CD8-positive, alpha-beta memory T cell (primary cell): ENCODE measurements at regions of chr4 and their contacts with region 1.

Region 1: GRCh38 chr4:109998867-109999584 is 86.3 kb downstream of the EGF start:
- DNase-seq: peak in 2 of 5 donors; percentile 42 to 51
- H3K4me3 ChIP-seq: no peak overlapping the region
- H3K4me3 Mint-ChIP-seq: no peak overlapping the region
- H3K27ac ChIP-seq: no peak overlapping the region
- H3K27ac Mint-ChIP-seq: no peak overlapping the region
- H3K4me1 ChIP-seq: no peaks in the 10 kb centered on the region
- H3K4me1 Mint-ChIP-seq: peaks cover 0 to 10% (median 8%) of the 10 kb centered on the region in 3 donors
- H3K27me3 ChIP-seq: no peaks in the 10 kb centered on the region
- H3K27me3 Mint-ChIP-seq: peaks cover 0 to 15% of the 10 kb centered on the region in 2 donors

Region 2: GRCh38 chr4:109902559-109903251 is 96.3 kb before region 1 on chr4:
- CTCF ChIA-PET with region 1: no interaction called
- POLR2A ChIA-PET with region 1: no interaction called
- DNase-seq: no peak
- H3K4me3 ChIP-seq: no peak overlapping the region
- H3K4me3 Mint-ChIP-seq: no peak overlapping the region
- H3K27ac ChIP-seq: no peak overlapping the region
- H3K27ac Mint-ChIP-seq: no peak overlapping the region
- H3K4me1 ChIP-seq: no peaks in the 10 kb centered on the region
- H3K4me1 Mint-ChIP-seq: no peaks in the 10 kb centered on the region
- H3K27me3 ChIP-seq: no peaks in the 10 kb centered on the region
- H3K27me3 Mint-ChIP-seq: peaks cover 11 to 47% of the 10 kb centered on the region in 2 donors

Region 3: DNA sequence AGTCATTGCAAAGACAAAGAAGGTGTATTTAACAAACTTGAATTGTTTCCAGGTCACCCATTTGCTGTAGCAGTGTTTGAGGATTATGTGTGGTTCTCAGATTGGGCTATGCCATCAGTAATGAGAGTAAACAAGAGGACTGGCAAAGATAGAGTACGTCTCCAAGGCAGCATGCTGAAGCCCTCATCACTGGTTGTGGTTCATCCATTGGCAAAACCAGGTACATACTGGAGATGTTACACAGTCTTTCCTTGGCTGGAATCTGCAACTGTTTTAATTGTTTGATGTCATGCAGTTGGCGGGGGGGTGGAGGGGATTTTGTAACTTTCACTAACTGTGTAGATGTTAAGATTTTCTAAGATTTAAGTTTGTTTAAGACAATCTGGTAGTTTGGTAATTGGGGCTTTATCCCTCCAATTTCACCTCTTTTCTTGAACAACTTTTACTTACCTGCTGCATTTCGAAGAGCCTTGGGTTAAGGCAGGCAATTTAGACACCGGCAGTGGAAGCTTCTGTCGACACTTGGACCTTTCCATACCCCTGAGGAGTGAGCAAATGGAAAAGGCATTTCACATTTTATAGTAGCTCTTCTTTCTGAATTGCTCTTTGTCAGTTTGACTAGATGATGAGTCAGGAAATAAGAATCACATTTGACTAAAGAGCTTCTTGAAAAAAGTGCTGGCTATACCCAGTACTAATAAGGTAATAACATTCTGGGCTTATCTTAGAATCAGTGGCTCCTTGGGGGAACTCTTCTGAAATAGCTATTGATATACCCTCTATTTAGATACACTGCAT is 18.9 kb before region 1 on chr4:
- CTCF ChIA-PET with region 1: interaction called, 11 read pairs
- POLR2A ChIA-PET with region 1: no interaction called
- DNase-seq: no peak
- H3K4me3 ChIP-seq: no peak overlapping the region
- H3K4me3 Mint-ChIP-seq: no peak overlapping the region
- H3K27ac ChIP-seq: no peak overlapping the region
- H3K27ac Mint-ChIP-seq: peak overlapping the region in 1 of 8 donors; percentile 17
- H3K4me1 ChIP-seq: no peaks in the 10 kb centered on the region
- H3K4me1 Mint-ChIP-seq: no peaks in the 10 kb centered on the region
- H3K27me3 ChIP-seq: no peaks in the 10 kb centered on the region
- H3K27me3 Mint-ChIP-seq: peaks cover 10 to 16% of the 10 kb centered on the region in 2 donors

Region 4: GRCh38 chr4:110510955-110511544 is 512.0 kb after region 1 on chr4:
- CTCF ChIA-PET with region 1: interaction called, 106 read pairs
- POLR2A ChIA-PET with region 1: no interaction called
- DNase-seq: peak in 2 of 5 donors; percentile 43
- H3K4me3 ChIP-seq: no peak overlapping the region
- H3K4me3 Mint-ChIP-seq: no peak overlapping the region
- H3K27ac ChIP-seq: no peak overlapping the region
- H3K27ac Mint-ChIP-seq: no peak overlapping the region
- H3K4me1 ChIP-seq: peaks cover 10% of the 10 kb centered on the region
- H3K4me1 Mint-ChIP-seq: peaks cover 9 to 12% (median 11%) of the 10 kb centered on the region in 3 donors
- H3K27me3 ChIP-seq: no peaks in the 10 kb centered on the region
- H3K27me3 Mint-ChIP-seq: no peaks in the 10 kb centered on the region

Region 5: DNA sequence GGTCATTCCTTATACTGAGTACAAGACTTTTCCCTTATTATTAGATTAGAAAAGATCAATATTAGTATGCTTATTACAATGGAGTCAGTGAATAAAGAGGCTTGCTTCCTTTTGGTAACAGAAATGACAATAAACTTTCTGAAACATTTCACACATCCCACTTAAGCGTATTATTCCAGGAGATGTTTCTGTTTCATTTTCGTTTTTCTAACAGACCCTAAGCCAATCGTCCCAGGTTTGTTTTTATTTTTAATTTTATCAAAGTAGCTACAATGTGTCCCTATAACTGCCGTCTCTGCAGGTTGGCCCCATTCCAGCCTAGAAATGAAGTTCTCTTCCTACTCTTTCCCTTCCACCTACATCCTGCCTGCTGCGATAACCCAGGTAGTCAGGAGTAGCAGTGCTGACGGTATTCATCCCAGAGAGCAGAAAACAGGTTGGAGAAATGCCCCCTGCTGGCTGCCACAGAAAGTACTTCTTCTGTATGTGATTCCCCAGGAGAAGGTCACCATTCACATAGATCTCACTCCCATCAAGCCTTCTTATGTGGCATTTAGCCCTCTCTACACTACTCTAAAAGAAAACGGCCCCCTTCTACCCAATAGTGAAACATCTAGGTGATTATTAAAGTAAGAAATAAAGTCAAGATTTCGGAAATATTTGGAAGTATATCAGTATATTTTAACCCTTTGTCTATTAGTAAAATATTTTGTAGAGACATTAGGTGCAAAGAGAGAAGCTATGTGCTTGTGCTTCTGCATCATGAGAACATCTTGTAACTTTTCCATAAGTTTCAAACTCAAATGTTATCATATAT is 517.3 kb after region 1 on chr4:
- CTCF ChIA-PET with region 1: interaction called, 106 read pairs
- POLR2A ChIA-PET with region 1: no interaction called
- DNase-seq: peak; percentile 61 to 76 (median 65)
- H3K4me3 ChIP-seq: peak overlapping the region; percentile 92
- H3K4me3 Mint-ChIP-seq: peak overlapping the region; percentile 86 to 98 (median 97)
- H3K27ac ChIP-seq: no peak overlapping the region
- H3K27ac Mint-ChIP-seq: peak overlapping the region in 7 of 8 donors; percentile 78 to 94 (median 90)
- H3K4me1 ChIP-seq: peaks cover 10% of the 10 kb centered on the region
- H3K4me1 Mint-ChIP-seq: peaks cover 12 to 18% (median 15%) of the 10 kb centered on the region in 3 donors
- H3K27me3 ChIP-seq: no peaks in the 10 kb centered on the region
- H3K27me3 Mint-ChIP-seq: peaks cover 3 to 10% of the 10 kb centered on the region in 2 donors